Activated B cell treated with CpG ODN at 0.5 μM for 24 hours (primary cell): ENCODE measurements at regions of chr11 and their contacts with region 1.

Region 1: GRCh38 chr11:70755410-70756161 is 357.3 kb downstream of the CTTN start:
- DNase-seq: peak; percentile 42
- ATAC-seq: peak; percentile 42
- H3K4me3 Mint-ChIP-seq: no peak overlapping the region
- H3K27ac Mint-ChIP-seq: no peak overlapping the region
- H3K4me1 Mint-ChIP-seq: no peaks in the 10 kb centered on the region
- H3K27me3 Mint-ChIP-seq: peaks cover 12% of the 10 kb centered on the region
- CTCF ChIP-seq: peak; percentile 40

Region 2: DNA sequence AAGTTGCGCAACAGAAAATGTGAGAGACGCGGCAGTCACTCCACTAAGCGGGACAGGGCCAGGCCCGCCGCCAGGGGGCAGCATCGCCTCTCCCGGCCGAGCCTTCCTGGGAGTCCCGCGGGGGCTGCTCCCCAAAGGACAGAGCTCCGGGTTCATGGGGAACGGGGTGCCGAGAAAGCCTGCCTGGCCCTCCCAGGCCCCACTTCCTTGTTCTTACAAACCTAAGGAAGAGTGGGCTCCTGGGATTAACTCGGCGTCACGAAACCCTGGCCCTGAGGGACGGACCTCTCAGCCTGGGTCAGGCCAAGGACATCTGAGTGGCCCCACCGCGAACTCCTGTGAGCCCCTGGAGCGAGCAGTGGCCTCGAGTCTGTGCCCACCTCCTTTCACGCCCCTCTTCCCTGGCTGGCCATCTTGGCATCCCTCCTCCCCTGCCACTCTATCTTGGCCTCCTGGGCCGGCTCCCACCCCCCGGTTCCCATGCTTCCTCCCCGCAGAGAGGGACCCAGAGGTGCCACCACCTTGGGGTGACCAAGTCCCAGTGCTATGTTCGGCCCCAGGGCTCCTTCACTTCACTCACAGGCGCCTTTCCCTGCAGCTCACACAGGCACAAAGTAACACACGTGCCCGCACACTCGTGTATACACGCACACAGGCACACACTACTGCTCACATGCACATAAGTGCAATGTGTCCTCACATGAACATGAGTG is 836.5 kb before region 1 on chr11:
- CTCF ChIA-PET with region 1: no interaction called
- POLR2A ChIA-PET with region 1: no interaction called
- intact Hi-C with region 1: loop called (anchors 5 kb)
- DNase-seq: peak; percentile 57
- ATAC-seq: no peak
- H3K4me3 Mint-ChIP-seq: no peak overlapping the region
- H3K27ac Mint-ChIP-seq: no peak overlapping the region
- H3K4me1 Mint-ChIP-seq: no peaks in the 10 kb centered on the region
- H3K27me3 Mint-ChIP-seq: peaks cover 16% of the 10 kb centered on the region
- CTCF ChIP-seq: no peak